Right cardiac atrium (tissue), 5 donors: ENCODE measurements at regions of chr5 and their contacts with region 1.

Region 1: DNA sequence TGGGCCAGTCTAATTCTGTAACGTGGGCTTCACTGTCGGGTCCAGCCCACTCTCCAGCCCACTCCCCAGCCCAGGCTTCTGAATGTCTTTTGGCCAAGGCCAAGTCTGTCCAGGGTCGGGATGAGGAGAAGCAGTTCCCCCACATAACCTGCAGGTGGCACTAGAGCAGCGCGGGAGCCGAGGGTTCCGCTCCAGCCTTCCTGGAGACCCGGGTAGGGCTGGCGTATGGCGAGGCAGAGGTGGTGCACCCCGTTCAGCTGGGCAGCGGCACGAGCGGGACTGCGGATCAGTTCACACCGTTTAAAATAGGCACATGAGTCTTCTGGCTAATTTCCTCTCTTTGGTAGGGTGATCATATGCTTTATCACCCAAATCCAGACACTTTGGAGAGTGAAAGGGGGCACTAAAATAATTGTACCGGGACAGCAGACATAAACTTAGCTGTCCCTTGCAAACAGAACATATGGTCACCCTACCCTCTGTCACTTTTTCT is 185.9 kb downstream of the MSX2 start:
- DNase-seq: peak; percentile 67 to 83 (median 82)
- ATAC-seq: peak; percentile 94 to 95
- H3K4me3 ChIP-seq: no peak overlapping the region
- H3K27ac ChIP-seq: no peak overlapping the region
- H3K4me1 ChIP-seq: no peaks in the 10 kb centered on the region
- H3K27me3 ChIP-seq: no peaks in the 10 kb centered on the region

Region 2: GRCh38 chr5:174935854-174936474 is 25.7 kb after region 1 on chr5:
- intact Hi-C with region 1: loop called in 1 of 4 experiments (anchors 2 kb)
- DNase-seq: peak; percentile 48 to 76 (median 72)
- ATAC-seq: peak; percentile 57 to 69
- H3K4me3 ChIP-seq: no peak overlapping the region
- H3K27ac ChIP-seq: no peak overlapping the region
- H3K4me1 ChIP-seq: no peaks in the 10 kb centered on the region
- H3K27me3 ChIP-seq: peaks cover 2% of the 10 kb centered on the region

Region 3: DNA sequence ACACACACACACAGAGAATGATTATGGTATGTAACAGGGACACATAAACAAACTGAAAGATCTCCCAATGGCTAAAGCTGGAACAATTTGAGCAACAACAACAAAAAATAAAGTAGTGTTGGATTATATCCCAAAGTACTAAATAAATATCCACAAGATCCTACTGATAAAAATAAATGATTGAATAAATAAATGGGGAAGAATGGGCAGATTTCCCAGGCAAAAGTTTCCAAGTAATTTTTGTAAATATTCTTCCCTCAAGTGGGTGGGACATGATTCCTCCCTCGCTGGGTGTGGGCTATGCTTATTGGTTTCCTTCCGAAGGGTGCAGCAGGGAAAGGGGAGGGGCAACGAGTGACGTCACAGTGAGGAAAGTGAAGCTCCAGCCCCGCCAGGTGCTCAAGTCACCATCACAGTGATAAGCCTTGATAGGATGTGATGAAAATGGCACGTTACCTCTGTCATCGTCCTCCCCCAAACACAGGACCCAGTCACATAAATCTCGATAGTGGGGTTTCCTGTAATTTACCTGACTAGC is 238.4 kb after region 1 on chr5:
- intact Hi-C with region 1: no loop called
- DNase-seq: no peak
- ATAC-seq: no peak
- H3K4me3 ChIP-seq: no peak overlapping the region
- H3K27ac ChIP-seq: no peak overlapping the region
- H3K4me1 ChIP-seq: no peaks in the 10 kb centered on the region
- H3K27me3 ChIP-seq: no peaks in the 10 kb centered on the region